GM12878 (cell line): ENCODE measurements at regions of chr1 and their contacts with region 1.

Region 1: GRCh38 chr1:26417111-26417759 is 6.6 kb downstream of the LIN28A start:
- DNase-seq: no peak
- ATAC-seq: peak; percentile 100
- H3K4me3 ChIP-seq: no peak overlapping the region
- H3K27ac ChIP-seq: no peak overlapping the region
- H3K4me1 ChIP-seq: no peaks in the 10 kb centered on the region
- H3K27me3 ChIP-seq: peaks cover 0 to 3% of the 10 kb centered on the region in 2 experiments; a peak in 3 of 4 replicates
- CTCF ChIP-seq: peak; percentile 87 to 97 (median 92)
- EP300 ChIP-seq: no peak
- POLR2A ChIP-seq: no peak
- RAD21 ChIP-seq: peak; percentile 71

Region 2: DNA sequence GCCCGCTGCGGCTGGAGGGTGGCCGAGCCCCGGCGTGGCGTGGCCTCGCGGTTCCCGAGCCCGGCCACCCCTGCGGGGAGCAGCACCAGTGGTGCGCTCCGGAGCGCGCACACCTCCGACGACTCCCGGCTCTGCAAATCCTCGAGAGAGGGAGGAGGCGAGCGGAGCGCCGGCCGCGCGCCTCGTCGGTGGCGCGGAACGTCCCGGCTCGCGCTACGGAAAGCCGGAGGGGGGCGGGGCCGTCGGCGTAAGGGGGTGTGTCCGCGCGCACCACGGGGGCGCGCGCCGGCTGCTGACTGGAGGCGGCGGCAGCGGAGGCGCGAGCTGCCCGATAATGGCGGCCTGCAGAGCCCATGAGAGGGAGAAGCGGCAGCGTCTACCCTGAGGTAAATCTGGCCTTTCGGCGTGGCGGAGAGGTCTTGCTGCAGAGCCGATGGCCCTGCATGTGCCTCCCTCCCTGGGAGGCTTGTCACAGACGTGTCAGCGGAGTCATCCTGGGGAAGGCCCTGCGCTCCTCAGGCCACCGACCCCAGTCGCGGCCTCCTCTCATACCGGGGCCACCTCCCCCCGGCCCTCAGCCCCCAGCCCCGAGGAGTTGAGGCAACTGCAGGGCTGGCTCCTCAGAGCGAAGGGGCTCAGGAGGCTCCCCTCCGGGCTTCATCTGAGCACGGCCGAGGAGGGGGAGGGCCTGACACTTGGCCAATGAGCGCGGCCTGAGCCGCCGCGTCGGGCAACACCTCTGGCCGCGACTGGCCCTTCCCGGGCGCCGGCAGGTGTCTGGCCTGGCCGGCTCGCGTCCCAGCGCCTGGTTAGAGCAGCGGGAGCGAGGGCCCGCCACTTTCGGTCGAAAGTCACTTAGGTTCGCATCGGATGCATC is 305.5 kb before region 1 on chr1 and contains the start of gene PDIK1L:
- CTCF ChIA-PET with region 1: interaction called, 3 read pairs
- POLR2A ChIA-PET with region 1: no interaction called
- RAD21 ChIA-PET with region 1: no interaction called
- SMC1A ChIA-PET with region 1: no interaction called
- in situ Hi-C with region 1: no loop called
- intact Hi-C with region 1: loop called (anchors 5 kb)
- DNase-seq: peak; percentile 73
- ATAC-seq: peak; percentile 86
- H3K4me3 ChIP-seq: peak within 1 kb of the TSS; percentile 89
- H3K27ac ChIP-seq: peak within 1 kb of the TSS; percentile 85
- H3K4me1 ChIP-seq: peaks cover 12% of the 10 kb centered on the region
- H3K27me3 ChIP-seq: no peaks in the 10 kb centered on the region
- CTCF ChIP-seq: no peak
- EP300 ChIP-seq: 0 out of 4 replicates have a peak, but pooled peaks of 1 of the 2 experiments have one; percentile 5
- POLR2A ChIP-seq: peak; percentile 88
- RAD21 ChIP-seq: no peak
- polyA plus RNA-seq, gene PDIK1L: 4.0 to 9.5 TPM

Region 3: GRCh38 chr1:26284597-26285360 is 132.5 kb before region 1 on chr1:
- CTCF ChIA-PET with region 1: interaction called, 94 read pairs
- POLR2A ChIA-PET with region 1: interaction called, 4 read pairs
- RAD21 ChIA-PET with region 1: interaction called, 20 read pairs
- SMC1A ChIA-PET with region 1: interaction called, 23 read pairs
- in situ Hi-C with region 1: no loop called
- intact Hi-C with region 1: loop called (anchors 2 kb)
- DNase-seq: no peak
- ATAC-seq: peak; percentile 60
- H3K4me3 ChIP-seq: no peak overlapping the region
- H3K27ac ChIP-seq: no peak overlapping the region
- H3K4me1 ChIP-seq: peaks cover 70% of the 10 kb centered on the region
- H3K27me3 ChIP-seq: no peaks in the 10 kb centered on the region
- CTCF ChIP-seq: peak; percentile 86 to 98 (median 90)
- EP300 ChIP-seq: no peak
- POLR2A ChIP-seq: peak; percentile 43
- RAD21 ChIP-seq: peak; percentile 84

Region 4: GRCh38 chr1:26363549-26364448 is 53.4 kb before region 1 on chr1:
- CTCF ChIA-PET with region 1: interaction called, 21 read pairs
- POLR2A ChIA-PET with region 1: interaction called, 3 read pairs
- RAD21 ChIA-PET with region 1: interaction called, 9 read pairs
- SMC1A ChIA-PET with region 1: interaction called, 3 read pairs
- in situ Hi-C with region 1: no loop called
- intact Hi-C with region 1: loop called (anchors 10 kb)
- DNase-seq: peak; percentile 16
- ATAC-seq: peak; percentile 91
- H3K4me3 ChIP-seq: no peak overlapping the region
- H3K27ac ChIP-seq: no peak overlapping the region
- H3K4me1 ChIP-seq: no peaks in the 10 kb centered on the region; the same call in 1 of the 2 replicates
- H3K27me3 ChIP-seq: peaks cover 3 to 5% of the 10 kb centered on the region in 2 experiments; a peak in 3 of 4 replicates
- CTCF ChIP-seq: peak; percentile 85 to 98 (median 98)
- EP300 ChIP-seq: no peak
- POLR2A ChIP-seq: no peak
- RAD21 ChIP-seq: peak; percentile 81

Region 5: DNA sequence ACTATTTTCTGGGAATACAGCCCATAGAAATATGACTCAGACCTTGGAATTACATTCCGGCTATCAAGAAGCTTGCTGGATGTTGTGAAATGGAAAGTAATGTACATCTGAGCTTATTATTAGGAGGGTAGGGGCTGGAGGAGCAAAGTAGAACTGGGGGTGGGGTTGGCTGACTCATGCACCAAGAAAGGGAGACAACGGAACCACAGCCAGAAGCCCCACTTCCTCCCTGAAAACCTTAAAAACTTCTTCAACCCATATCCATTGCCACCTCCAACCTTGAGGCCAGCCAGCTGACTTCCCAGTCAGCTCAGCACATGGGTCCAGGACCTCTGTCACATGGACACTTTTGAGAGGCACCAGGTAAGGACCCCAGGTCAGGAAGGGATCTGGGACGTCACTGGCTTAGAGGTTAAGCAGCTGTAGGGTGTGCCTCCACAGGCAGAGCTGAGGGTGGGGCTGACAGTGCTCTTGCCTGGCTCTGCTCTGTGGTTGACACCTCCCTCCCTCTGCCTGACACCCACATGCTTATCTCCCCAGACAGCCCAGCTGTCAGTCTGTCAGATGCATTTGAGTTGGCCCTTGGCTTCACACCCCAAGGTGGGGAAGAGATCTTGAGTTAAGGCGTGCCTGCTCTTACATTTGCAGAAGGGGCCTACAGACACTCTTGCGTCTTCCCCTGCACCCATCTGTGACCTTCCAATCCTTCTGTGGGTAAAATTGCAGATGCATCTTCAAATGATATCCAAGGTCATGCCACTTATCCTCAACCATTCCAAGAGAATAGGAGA is 39.0 kb before region 1 on chr1:
- CTCF ChIA-PET with region 1: interaction called, 17 read pairs
- POLR2A ChIA-PET with region 1: no interaction called
- RAD21 ChIA-PET with region 1: interaction called, 6 read pairs
- SMC1A ChIA-PET with region 1: interaction called, 7 read pairs
- in situ Hi-C with region 1: no loop called
- intact Hi-C with region 1: no loop called
- DNase-seq: peak; percentile 73
- ATAC-seq: peak; percentile 97
- H3K4me3 ChIP-seq: peak overlapping the region; percentile 19; the same call in 1 of the 2 replicates
- H3K27ac ChIP-seq: peak overlapping the region; percentile 38
- H3K4me1 ChIP-seq: peaks cover 22% of the 10 kb centered on the region
- H3K27me3 ChIP-seq: no peaks in the 10 kb centered on the region
- CTCF ChIP-seq: no peak
- EP300 ChIP-seq: peak in 1 of 2 experiments; percentile 63; a peak in 2 of 4 replicates
- POLR2A ChIP-seq: no peak
- RAD21 ChIP-seq: no peak

Region 6: GRCh38 chr1:26431979-26432695 is 14.9 kb after region 1 on chr1 and contains the start of gene DHDDS:
- CTCF ChIA-PET with region 1: interaction called, 17 read pairs
- POLR2A ChIA-PET with region 1: interaction called, 3 read pairs
- RAD21 ChIA-PET with region 1: interaction called, 5 read pairs
- SMC1A ChIA-PET with region 1: interaction called, 7 read pairs
- in situ Hi-C with region 1: no loop called
- intact Hi-C with region 1: no loop called
- DNase-seq: peak; percentile 95
- ATAC-seq: peak; percentile 99
- H3K4me3 ChIP-seq: peak within 1 kb of the TSS; percentile 98
- H3K27ac ChIP-seq: peak within 1 kb of the TSS; percentile 59
- H3K4me1 ChIP-seq: peaks cover 9% of the 10 kb centered on the region
- H3K27me3 ChIP-seq: no peaks in the 10 kb centered on the region
- CTCF ChIP-seq: no peak
- EP300 ChIP-seq: no peak
- POLR2A ChIP-seq: peak; percentile 96
- RAD21 ChIP-seq: no peak
- polyA plus RNA-seq, gene DHDDS: 22.7 to 27.2 TPM

Region 7: GRCh38 chr1:26608895-26609294 is 191.7 kb after region 1 on chr1:
- CTCF ChIA-PET with region 1: no interaction called
- POLR2A ChIA-PET with region 1: no interaction called
- RAD21 ChIA-PET with region 1: no interaction called
- SMC1A ChIA-PET with region 1: no interaction called
- in situ Hi-C with region 1: no loop called
- intact Hi-C with region 1: no loop called
- DNase-seq: no peak
- ATAC-seq: no peak
- H3K4me3 ChIP-seq: no peak overlapping the region
- H3K27ac ChIP-seq: no peak overlapping the region
- H3K4me1 ChIP-seq: no peaks in the 10 kb centered on the region
- H3K27me3 ChIP-seq: no peaks in the 10 kb centered on the region
- CTCF ChIP-seq: peak in 1 of 3 experiments; percentile 35; a peak in 2 of 6 replicates
- EP300 ChIP-seq: no peak
- POLR2A ChIP-seq: no peak
- RAD21 ChIP-seq: peak; percentile 49

Region 8: DNA sequence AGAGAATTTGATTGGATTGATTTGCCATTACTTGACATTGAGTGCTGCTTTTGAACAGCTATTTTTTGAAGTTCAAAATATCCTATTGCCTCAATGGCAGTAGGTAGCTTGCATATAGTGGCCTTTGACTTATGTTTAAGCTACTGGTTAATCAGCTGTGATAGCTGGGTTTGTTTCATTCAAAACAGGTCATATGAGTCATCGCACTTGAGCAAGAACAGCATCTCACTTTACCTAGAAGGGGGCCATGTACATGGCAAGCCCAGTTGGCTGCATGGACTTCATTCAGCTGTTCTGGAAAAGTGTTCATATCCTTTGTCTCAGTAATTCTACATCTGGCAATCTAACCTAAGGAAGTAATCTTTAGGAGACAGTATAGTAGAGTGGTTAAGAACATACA is 249.6 kb after region 1 on chr1:
- CTCF ChIA-PET with region 1: no interaction called
- POLR2A ChIA-PET with region 1: no interaction called
- RAD21 ChIA-PET with region 1: no interaction called
- SMC1A ChIA-PET with region 1: no interaction called
- in situ Hi-C with region 1: no loop called
- intact Hi-C with region 1: no loop called
- DNase-seq: no peak
- ATAC-seq: no peak
- H3K4me3 ChIP-seq: no peak overlapping the region
- H3K27ac ChIP-seq: no peak overlapping the region
- H3K4me1 ChIP-seq: no peaks in the 10 kb centered on the region
- H3K27me3 ChIP-seq: no peaks in the 10 kb centered on the region
- CTCF ChIP-seq: no peak
- EP300 ChIP-seq: no peak
- POLR2A ChIP-seq: no peak
- RAD21 ChIP-seq: no peak

Region 9: GRCh38 chr1:27416387-27417111 is 999.3 kb after region 1 on chr1:
- CTCF ChIA-PET with region 1: no interaction called
- POLR2A ChIA-PET with region 1: no interaction called
- RAD21 ChIA-PET with region 1: no interaction called
- SMC1A ChIA-PET with region 1: no interaction called
- in situ Hi-C with region 1: no loop called
- intact Hi-C with region 1: no loop called
- DNase-seq: peak; percentile 70
- ATAC-seq: peak; percentile 73
- H3K4me3 ChIP-seq: no peak overlapping the region
- H3K27ac ChIP-seq: peak overlapping the region; percentile 74
- H3K4me1 ChIP-seq: peaks cover 36% of the 10 kb centered on the region
- H3K27me3 ChIP-seq: no peaks in the 10 kb centered on the region
- CTCF ChIP-seq: peak; percentile 74 to 82 (median 74)
- EP300 ChIP-seq: 0 out of 4 replicates have a peak, but pooled peaks of 1 of the 2 experiments have one; percentile 26
- POLR2A ChIP-seq: no peak
- RAD21 ChIP-seq: peak; percentile 87